Right ventricle myocardium superior (tissue), 1 donor: ENCODE measurements at regions of chr5 and their contacts with region 1.

Region 1: DNA sequence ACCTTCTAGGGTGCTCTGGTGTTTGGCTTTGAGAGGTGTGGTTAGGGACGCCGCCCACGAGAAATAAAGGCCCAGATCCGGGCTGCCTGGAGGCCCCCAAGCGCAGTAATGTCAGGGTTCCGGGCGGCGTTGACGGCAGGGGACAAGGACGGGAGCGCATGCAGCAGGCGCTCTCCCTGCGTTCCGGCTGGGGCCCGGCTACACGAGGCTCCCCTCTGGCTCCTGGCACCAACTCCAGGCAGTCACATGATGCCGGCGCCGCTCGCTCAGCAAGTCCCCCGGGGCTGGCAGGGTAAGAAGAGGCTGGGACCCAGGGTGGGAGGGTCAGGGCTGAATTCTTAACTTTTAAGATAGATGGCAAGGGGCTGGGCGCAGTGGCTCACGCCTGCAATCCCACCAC is 28.1 kb downstream of the UBTD2 start:
- DNase-seq: no peak
- ATAC-seq: no peak

Region 2: DNA sequence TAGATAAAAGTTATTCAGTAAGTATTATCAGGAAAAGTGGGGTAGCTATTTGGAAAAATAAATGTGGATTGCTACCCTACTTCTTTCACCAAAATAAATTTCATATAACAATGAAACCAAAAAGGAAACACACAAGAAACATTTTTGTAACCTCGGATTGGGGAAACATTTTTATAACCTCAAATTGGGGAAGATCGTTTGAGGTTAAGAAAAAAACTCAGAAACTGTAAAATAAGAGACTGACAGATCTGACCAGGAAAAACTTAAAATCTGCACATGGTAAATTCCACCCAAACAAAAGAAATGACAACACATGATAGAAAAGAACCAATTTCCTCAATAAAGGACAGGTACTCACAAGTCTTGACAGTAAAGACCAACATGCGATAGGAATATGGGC is 47.9 kb before region 1 on chr5:
- intact Hi-C with region 1: loop called (anchors 10 kb)
- DNase-seq: no peak
- ATAC-seq: no peak

Region 3: DNA sequence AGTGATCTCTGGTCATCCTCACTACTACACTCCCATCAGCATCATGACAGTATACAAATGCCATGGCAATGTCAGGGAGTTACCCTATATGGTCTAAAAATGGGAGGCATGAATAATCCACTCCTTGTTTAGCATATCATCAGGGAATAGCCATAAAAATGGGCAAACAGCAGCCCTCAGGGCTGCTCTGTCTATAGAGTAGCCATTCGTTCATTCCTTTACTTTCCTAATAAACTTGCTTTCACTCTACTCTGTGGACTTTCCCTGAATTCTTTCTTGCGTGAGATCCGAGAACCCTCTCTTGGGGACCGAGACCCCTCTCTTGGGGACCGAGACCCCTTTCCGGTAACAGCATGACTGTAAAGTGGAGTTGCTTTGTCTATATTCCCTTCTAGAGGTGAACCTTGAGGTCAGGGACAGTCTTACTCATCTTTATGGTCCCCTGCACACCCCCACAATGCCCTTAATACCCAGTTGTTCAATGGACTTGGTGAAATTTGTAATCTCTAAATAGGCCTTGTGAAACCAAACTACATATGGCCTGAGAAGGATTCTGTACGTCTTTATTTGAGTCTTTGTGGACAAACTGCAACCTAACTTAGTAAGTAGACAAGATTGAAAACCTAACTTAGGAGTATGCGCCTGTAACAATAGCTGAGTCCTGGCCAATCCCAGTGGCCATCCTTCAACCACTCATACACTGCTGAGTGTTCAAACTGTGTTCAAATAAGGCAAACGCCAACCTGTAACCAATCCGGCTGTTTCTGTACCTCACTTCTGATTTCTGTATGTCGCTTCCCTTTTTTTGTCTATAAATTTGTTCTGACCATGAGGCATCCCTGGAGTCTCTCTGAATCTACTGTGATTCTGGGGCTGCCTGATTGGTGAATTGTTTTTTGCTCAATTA is 60.4 kb after region 1 on chr5:
- intact Hi-C with region 1: no loop called
- DNase-seq: no peak
- ATAC-seq: no peak

Region 4: GRCh38 chr5:172334196-172334595 is 78.8 kb after region 1 on chr5:
- intact Hi-C with region 1: no loop called
- DNase-seq: no peak
- ATAC-seq: no peak

Region 5: GRCh38 chr5:172429201-172429940 is 173.9 kb after region 1 on chr5:
- intact Hi-C with region 1: no loop called
- DNase-seq: peak; percentile 65
- ATAC-seq: peak; percentile 78